ENCODE measurements at regions of chrX and their contacts with region 1.

Region 1: GRCh38 chrX:16882702-16883486 is 12.7 kb upstream of the RBBP7 start:
- DNase-seq: peak in 34 of 35 experiments; percentile 36 to 78 (median 60)
- ATAC-seq: peak; percentile 75 to 83 (median 80)
- H3K4me3 ChIP-seq: peak overlapping the region; percentile 43 to 71
- H3K4me3 Mint-ChIP-seq: peak overlapping the region; percentile 73 to 75 (median 74)
- H3K27ac ChIP-seq: peak overlapping the region; percentile 60
- H3K27ac Mint-ChIP-seq: peak overlapping the region; percentile 15 to 75
- H3K4me1 ChIP-seq: peaks cover 2 to 11% of the 10 kb centered on the region in 2 experiments
- H3K4me1 Mint-ChIP-seq: peaks cover 7 to 12% (median 9%) of the 10 kb centered on the region in 3 donors
- H3K27me3 ChIP-seq: no peaks in the 10 kb centered on the region
- H3K27me3 Mint-ChIP-seq: peaks cover 0 to 31% of the 10 kb centered on the region in 2 donors

Region 2: GRCh38 chrX:16733013-16733412 is 149.9 kb before region 1 on chrX:
- CTCF ChIA-PET with region 1: no interaction called
- POLR2A ChIA-PET with region 1: no interaction called
- DNase-seq: no peak
- ATAC-seq: peak in 1 of 4 experiments; percentile 11
- H3K4me3 ChIP-seq: no peak overlapping the region
- H3K4me3 Mint-ChIP-seq: no peak overlapping the region
- H3K27ac ChIP-seq: no peak overlapping the region
- H3K27ac Mint-ChIP-seq: no peak overlapping the region
- H3K4me1 ChIP-seq: no peaks in the 10 kb centered on the region
- H3K4me1 Mint-ChIP-seq: peaks cover 6 to 13% (median 7%) of the 10 kb centered on the region in 3 donors
- H3K27me3 ChIP-seq: no peaks in the 10 kb centered on the region
- H3K27me3 Mint-ChIP-seq: no peaks in the 10 kb centered on the region

Region 3: GRCh38 chrX:16855363-16856075 is 27.4 kb before region 1 on chrX:
- CTCF ChIA-PET with region 1: no interaction called
- POLR2A ChIA-PET with region 1: no interaction called
- DNase-seq: no peak
- ATAC-seq: no peak
- H3K4me3 ChIP-seq: no peak overlapping the region
- H3K4me3 Mint-ChIP-seq: no peak overlapping the region
- H3K27ac ChIP-seq: no peak overlapping the region
- H3K27ac Mint-ChIP-seq: no peak overlapping the region
- H3K4me1 ChIP-seq: no peaks in the 10 kb centered on the region
- H3K4me1 Mint-ChIP-seq: peaks cover 0 to 29% (median 20%) of the 10 kb centered on the region in 3 donors
- H3K27me3 ChIP-seq: no peaks in the 10 kb centered on the region
- H3K27me3 Mint-ChIP-seq: peaks cover 0 to 3% of the 10 kb centered on the region in 2 donors

Region 4: GRCh38 chrX:16914058-16914457 is 31.2 kb after region 1 on chrX:
- CTCF ChIA-PET with region 1: no interaction called
- POLR2A ChIA-PET with region 1: no interaction called
- DNase-seq: no peak
- ATAC-seq: no peak
- H3K4me3 ChIP-seq: no peak overlapping the region
- H3K4me3 Mint-ChIP-seq: no peak overlapping the region
- H3K27ac ChIP-seq: no peak overlapping the region
- H3K27ac Mint-ChIP-seq: no peak overlapping the region
- H3K4me1 ChIP-seq: no peaks in the 10 kb centered on the region
- H3K4me1 Mint-ChIP-seq: no peaks in the 10 kb centered on the region
- H3K27me3 ChIP-seq: no peaks in the 10 kb centered on the region
- H3K27me3 Mint-ChIP-seq: peaks cover 0 to 13% of the 10 kb centered on the region in 2 donors

Region 5: GRCh38 chrX:17046478-17047097 is 163.7 kb after region 1 on chrX:
- CTCF ChIA-PET with region 1: interaction called, 12 to 19 read pairs
- POLR2A ChIA-PET with region 1: no interaction called
- DNase-seq: peak in 26 of 35 experiments; percentile 0 to 55 (median 12)
- ATAC-seq: peak in 1 of 4 experiments; percentile 38
- H3K4me3 ChIP-seq: no peak overlapping the region
- H3K4me3 Mint-ChIP-seq: no peak overlapping the region
- H3K27ac ChIP-seq: no peak overlapping the region
- H3K27ac Mint-ChIP-seq: no peak overlapping the region
- H3K4me1 ChIP-seq: no peaks in the 10 kb centered on the region
- H3K4me1 Mint-ChIP-seq: no peaks in the 10 kb centered on the region
- H3K27me3 ChIP-seq: no peaks in the 10 kb centered on the region
- H3K27me3 Mint-ChIP-seq: peaks cover 0 to 16% of the 10 kb centered on the region in 2 donors

Region 6: GRCh38 chrX:18677140-18677869 is 1794.4 kb after region 1 on chrX:
- CTCF ChIA-PET with region 1: interaction called in 1 of 2 experiments, 10 read pairs
- POLR2A ChIA-PET with region 1: no interaction called
- DNase-seq: no peak
- ATAC-seq: no peak
- H3K4me3 ChIP-seq: no peak overlapping the region
- H3K4me3 Mint-ChIP-seq: peak overlapping the region in 2 of 3 donors; percentile 10 to 32
- H3K27ac ChIP-seq: no peak overlapping the region
- H3K27ac Mint-ChIP-seq: peak overlapping the region; percentile 28 to 39
- H3K4me1 ChIP-seq: peaks cover 0 to 5% of the 10 kb centered on the region in 2 experiments
- H3K4me1 Mint-ChIP-seq: peaks cover 6 to 18% (median 8%) of the 10 kb centered on the region in 3 donors
- H3K27me3 ChIP-seq: no peaks in the 10 kb centered on the region
- H3K27me3 Mint-ChIP-seq: no peaks in the 10 kb centered on the region

Measured in T-cell (primary cell).